H1 (cell line): ENCODE measurements at regions of chr2 and their contacts with region 1.

Region 1: GRCh38 chr2:24792874-24793760 is at the starts of genes CENPO and PTRHD1:
- DNase-seq: peak; percentile 90 to 94
- H3K4me3 ChIP-seq: peak within 1 kb of the TSS; percentile 74 to 98 (median 86)
- H3K27ac ChIP-seq: peak within 1 kb of the TSS; percentile 100
- H3K4me1 ChIP-seq: peaks cover 0 to 7% (median 6%) of the 10 kb centered on the region in 4 experiments; a peak in 4 of 7 replicates
- H3K27me3 ChIP-seq: no peaks in the 10 kb centered on the region
- CTCF ChIP-seq: peak in 2 of 3 experiments; percentile 24 to 37; a peak in 2 of 4 replicates
- EP300 ChIP-seq: peak in 1 of 2 experiments; percentile 61; a peak in 1 of 3 replicates
- POLR2A ChIP-seq: peak; percentile 81 to 95
- RAD21 ChIP-seq: peak; percentile 22 to 28; a peak in 2 of 4 replicates
- total RNA-seq, gene CENPO: 46.3 and 47.0 TPM in 2 replicates
- total RNA-seq, gene PTRHD1: 46.2 and 48.6 TPM in 2 replicates

Region 2: GRCh38 chr2:24771764-24772586 is 21.1 kb before region 1 on chr2:
- CTCF ChIA-PET with region 1: interaction called, 7 read pairs
- POLR2A ChIA-PET with region 1: interaction called, 22 read pairs
- DNase-seq: no peak
- H3K4me3 ChIP-seq: no peak overlapping the region
- H3K27ac ChIP-seq: no peak overlapping the region
- H3K4me1 ChIP-seq: peaks cover 0 to 3% (median 1%) of the 10 kb centered on the region in 4 experiments; a peak in 3 of 7 replicates
- H3K27me3 ChIP-seq: no peaks in the 10 kb centered on the region
- CTCF ChIP-seq: no peak
- EP300 ChIP-seq: no peak
- POLR2A ChIP-seq: no peak
- RAD21 ChIP-seq: no peak

Region 3: DNA sequence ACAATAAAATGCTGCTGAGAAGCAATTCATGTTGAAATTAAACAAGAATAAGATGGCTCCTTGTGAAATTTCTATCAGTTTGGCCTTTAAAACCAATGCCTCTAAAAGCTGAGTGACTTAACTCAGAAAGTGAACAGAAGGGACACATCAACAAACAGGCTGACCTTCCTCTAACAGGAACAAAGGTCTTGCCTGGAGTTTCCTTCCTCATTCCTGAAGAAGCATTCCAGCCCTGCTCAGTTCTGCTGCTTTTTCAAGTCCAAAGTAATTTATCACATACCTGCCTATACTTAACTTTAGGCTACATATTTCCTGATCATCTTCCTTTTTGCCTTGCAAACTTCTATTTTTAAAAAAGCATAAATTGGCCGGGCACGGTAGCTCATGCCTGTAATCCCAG is 14.0 kb before region 1 on chr2:
- CTCF ChIA-PET with region 1: interaction called, 37 read pairs
- POLR2A ChIA-PET with region 1: interaction called, 22 read pairs
- DNase-seq: peak in 1 of 2 experiments; percentile 16
- H3K4me3 ChIP-seq: no peak overlapping the region
- H3K27ac ChIP-seq: no peak overlapping the region
- H3K4me1 ChIP-seq: peaks cover 0 to 5% (median 0%) of the 10 kb centered on the region in 4 experiments; a peak in 2 of 7 replicates
- H3K27me3 ChIP-seq: no peaks in the 10 kb centered on the region
- CTCF ChIP-seq: no peak
- EP300 ChIP-seq: no peak
- POLR2A ChIP-seq: no peak
- RAD21 ChIP-seq: no peak

Region 4: DNA sequence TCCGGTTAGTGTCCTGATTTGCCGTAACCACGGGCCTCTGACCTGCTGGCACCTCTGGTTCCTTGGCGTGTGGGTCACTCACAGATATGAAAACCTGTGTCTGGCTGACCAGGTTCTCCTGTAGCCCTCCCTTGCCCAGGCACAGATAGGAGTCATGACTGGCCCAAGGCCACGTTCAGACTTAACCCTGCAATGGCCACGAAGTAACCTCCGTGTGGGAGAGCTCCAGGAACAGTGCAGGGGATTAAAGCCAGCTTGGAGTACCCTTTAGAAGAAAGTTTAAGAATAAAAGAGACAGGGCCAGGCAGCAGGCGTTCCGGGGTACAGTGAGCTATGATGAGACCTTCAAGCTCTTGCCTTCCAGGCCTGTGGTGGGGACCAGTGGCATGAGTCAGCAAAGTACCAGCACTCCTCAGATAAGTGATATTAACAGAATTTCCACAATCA is 25.6 kb after region 1 on chr2:
- CTCF ChIA-PET with region 1: interaction called, 24 read pairs
- POLR2A ChIA-PET with region 1: interaction called, 10 read pairs
- DNase-seq: peak in 1 of 2 experiments; percentile 39
- H3K4me3 ChIP-seq: no peak overlapping the region
- H3K27ac ChIP-seq: no peak overlapping the region
- H3K4me1 ChIP-seq: peaks cover 15 to 25% (median 20%) of the 10 kb centered on the region in 4 experiments
- H3K27me3 ChIP-seq: no peaks in the 10 kb centered on the region
- CTCF ChIP-seq: no peak
- EP300 ChIP-seq: no peak
- POLR2A ChIP-seq: no peak
- RAD21 ChIP-seq: no peak